ENCODE measurements at regions of chr20 and their contacts with region 1.

Region 1: DNA sequence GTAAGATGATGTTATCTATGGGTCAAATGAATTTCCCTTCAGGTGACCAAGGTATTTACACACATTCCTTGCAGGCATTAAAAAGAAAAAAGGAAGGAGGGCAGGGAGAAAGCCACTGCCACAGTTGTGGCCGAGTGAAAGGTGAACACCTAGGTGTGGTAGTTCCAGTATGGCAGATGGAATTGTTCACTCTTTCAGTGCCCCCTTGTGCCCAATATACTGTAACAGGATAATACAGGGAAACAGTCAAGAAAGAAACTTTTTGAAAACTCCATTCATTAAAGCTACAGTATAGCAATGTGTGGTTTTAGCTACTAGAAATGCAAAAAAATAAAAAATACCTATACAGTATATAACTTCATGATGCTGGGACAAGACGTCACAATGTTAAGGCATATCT is 52.1 kb downstream of the BMP2 start:
- DNase-seq: peak; percentile 32
- H3K4me3 Mint-ChIP-seq: no peak overlapping the region
- H3K27ac Mint-ChIP-seq: no peak overlapping the region
- H3K4me1 Mint-ChIP-seq: peaks cover 6% of the 10 kb centered on the region
- H3K27me3 Mint-ChIP-seq: no peaks in the 10 kb centered on the region
- CTCF ChIP-seq: no peak

Region 2: GRCh38 chr20:6178537-6178936 is 641.1 kb before region 1 on chr20:
- CTCF ChIA-PET with region 1: no interaction called
- intact Hi-C with region 1: loop called (anchors 5 kb)
- DNase-seq: no peak
- H3K4me3 Mint-ChIP-seq: no peak overlapping the region
- H3K27ac Mint-ChIP-seq: no peak overlapping the region
- H3K4me1 Mint-ChIP-seq: no peaks in the 10 kb centered on the region
- H3K27me3 Mint-ChIP-seq: peaks cover 34% of the 10 kb centered on the region
- CTCF ChIP-seq: no peak

Region 3: DNA sequence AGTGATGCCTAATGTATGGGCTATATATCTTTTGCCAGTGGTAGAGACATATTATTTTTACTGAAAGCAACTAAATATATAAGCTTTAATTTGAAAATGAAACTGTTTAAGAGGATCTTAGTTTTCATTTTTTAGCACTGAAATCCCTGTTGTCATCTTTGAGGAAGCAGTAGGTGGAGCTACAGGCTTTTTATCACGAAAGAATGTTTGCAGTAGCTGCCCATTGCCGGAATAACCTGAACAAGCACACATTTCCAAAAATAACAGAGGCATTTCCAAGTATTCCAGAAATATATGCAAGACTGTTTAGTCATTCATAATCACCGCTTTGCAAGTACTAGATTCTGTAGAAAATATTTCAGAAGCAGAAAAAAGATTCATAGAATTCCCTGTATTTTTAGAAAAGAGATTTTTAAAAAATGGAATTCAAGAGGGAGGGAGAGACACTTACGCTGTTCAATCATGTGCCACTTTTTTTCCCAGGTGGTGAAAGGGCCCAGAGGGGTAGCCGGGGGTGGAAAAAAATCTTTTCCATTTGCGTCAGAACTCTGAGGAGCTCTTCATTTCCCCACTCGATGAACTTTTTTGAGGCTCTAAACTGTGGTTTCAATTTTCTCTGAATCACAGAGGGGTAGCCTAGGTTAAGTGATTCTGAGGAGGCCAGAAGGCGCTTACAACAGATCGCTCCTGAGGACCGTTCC is 554.3 kb before region 1 on chr20:
- CTCF ChIA-PET with region 1: no interaction called
- intact Hi-C with region 1: loop called (anchors 1 kb)
- DNase-seq: peak; percentile 6
- H3K4me3 Mint-ChIP-seq: no peak overlapping the region
- H3K27ac Mint-ChIP-seq: no peak overlapping the region
- H3K4me1 Mint-ChIP-seq: peaks cover 8% of the 10 kb centered on the region
- H3K27me3 Mint-ChIP-seq: peaks cover 48% of the 10 kb centered on the region
- CTCF ChIP-seq: no peak

Region 4: DNA sequence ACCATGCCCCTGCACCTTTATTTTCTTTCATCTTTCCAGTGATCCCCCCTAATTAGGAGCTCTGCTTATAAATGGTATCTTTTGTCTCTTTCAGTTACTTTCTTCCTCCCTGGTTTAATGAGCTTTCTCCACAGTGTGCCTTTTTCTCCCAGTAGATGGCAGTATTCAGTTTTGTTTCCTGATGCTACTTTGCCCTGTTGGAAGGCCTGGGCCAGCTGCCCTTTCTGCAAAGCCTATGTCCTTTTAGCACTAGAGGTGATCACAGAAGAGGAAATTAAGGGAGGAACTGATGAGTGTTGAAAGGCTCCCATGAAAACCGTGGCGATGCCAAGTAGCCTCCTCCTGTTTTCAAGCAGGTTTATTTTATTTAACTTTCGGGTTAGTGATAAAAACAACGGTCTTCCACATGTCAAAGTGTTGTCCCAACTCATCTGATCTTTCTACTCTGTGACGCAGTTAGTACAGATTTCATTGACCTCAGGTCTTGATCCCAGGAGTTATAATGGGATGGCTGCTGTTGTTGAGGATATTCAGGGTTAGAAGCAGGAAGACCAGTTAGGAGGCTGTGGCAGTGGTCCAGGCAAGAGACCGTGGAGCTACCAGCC is 236.4 kb before region 1 on chr20:
- CTCF ChIA-PET with region 1: interaction called, 8 read pairs
- intact Hi-C with region 1: loop called (anchors 2 kb)
- DNase-seq: peak; percentile 52
- H3K4me3 Mint-ChIP-seq: no peak overlapping the region
- H3K27ac Mint-ChIP-seq: no peak overlapping the region
- H3K4me1 Mint-ChIP-seq: peaks cover 44% of the 10 kb centered on the region
- H3K27me3 Mint-ChIP-seq: no peaks in the 10 kb centered on the region
- CTCF ChIP-seq: peak; percentile 44